ENCODE measurements at regions of chr7 and their contacts with region 1.

Region 1: GRCh38 chr7:50418086-50418515 is 32.0 kb downstream of the FIGNL1 start:
- DNase-seq: peak; percentile 55
- H3K4me3 ChIP-seq: no peak overlapping the region
- H3K27ac ChIP-seq: no peak overlapping the region
- H3K4me1 ChIP-seq: no peaks in the 10 kb centered on the region
- H3K27me3 ChIP-seq: peaks cover 7% of the 10 kb centered on the region
- CTCF ChIP-seq: peak; percentile 77

Region 2: DNA sequence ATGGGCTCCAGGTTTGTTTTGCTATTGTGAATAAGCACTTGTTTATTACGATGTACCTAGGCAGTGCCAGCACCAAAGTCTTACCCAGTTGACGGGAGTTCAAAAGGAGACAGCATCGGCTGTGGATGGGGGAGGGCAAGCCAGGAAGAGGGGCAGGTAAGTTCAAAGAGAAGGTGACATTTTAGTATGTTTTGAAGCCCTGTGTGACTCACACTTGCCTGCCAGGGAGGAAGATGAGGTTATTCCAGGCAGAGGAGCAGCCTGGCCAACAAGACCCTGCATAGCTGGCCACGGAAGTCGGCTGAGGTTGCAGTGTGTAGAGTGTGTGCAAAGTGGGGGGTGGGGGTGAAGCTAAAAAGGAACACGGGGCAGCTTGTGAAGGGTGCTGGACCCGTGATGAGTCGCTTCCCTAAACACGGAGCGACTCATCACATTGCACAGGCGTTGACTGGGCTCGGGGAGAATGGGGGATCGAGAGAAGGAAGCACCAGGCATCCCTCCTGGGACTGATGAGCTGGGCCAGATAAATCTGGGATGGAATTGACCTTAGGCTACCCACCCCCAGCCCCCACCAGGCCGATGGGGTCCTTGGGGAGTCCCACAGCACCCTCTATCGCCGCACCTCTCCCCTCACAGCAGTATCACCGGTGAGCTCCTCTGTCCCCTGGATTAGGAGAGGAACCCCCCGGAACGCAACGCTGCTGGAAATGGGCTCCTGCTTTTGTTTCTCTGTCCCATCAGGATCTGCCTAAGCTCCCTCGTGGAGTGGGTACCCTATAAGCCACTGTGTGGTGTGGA is 211.4 kb before region 1 on chr7:
- intact Hi-C with region 1: loop called (anchors 5 kb)
- DNase-seq: no peak
- H3K4me3 ChIP-seq: no peak overlapping the region
- H3K27ac ChIP-seq: no peak overlapping the region
- H3K4me1 ChIP-seq: peaks cover 2% of the 10 kb centered on the region
- H3K27me3 ChIP-seq: peaks cover 61% of the 10 kb centered on the region
- CTCF ChIP-seq: no peak

Region 3: DNA sequence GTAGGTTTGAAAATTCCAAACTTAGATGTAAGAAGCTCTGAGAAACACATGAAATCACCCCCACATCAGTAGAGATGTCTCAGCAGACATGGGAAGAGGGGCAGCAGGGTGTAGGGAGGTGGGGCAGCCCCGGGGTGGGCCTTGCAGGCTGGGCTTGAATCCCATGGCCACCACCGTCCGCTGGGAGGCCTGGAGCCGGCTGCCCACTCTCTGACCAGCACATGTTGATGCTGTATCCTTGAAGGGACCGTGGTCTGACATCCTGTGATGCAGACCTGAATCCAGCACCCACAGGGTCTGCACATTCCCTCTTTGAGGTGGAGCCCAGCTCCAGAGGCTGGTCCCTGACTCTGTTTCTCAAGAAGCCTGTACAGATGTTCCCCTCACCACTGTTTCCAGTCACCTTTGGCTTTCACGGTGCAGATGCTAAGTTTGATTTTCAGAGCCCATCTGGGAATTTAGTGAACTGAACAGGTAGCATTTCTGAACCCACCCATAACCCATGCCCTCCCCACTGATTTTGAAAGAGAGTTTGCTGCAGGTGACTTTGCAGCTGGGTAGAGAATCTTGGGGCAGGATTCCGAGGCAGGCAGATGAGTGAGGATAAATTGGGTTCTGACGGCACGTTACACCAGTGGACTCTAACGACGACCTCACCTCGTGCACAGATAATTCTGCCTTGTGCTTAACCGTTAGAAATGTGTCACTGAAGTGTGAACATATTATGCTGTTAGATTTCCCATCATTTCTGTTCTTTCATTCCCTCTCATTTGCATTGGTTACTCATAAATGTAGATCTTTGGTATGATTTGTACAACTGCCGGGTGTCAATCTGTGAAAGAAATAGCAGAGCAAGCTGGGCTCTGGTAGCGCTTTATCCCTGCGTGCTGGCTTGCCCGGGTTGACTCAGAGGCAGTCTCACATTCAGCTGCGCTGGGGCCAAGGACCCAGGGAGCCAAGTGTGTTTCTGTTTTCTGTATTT is 67.8 kb before region 1 on chr7:
- intact Hi-C with region 1: no loop called
- DNase-seq: no peak
- H3K4me3 ChIP-seq: no peak overlapping the region
- H3K27ac ChIP-seq: no peak overlapping the region
- H3K4me1 ChIP-seq: no peaks in the 10 kb centered on the region
- H3K27me3 ChIP-seq: peaks cover 94% of the 10 kb centered on the region
- CTCF ChIP-seq: no peak

Region 4: GRCh38 chr7:50379082-50379481 is 39.0 kb before region 1 on chr7:
- intact Hi-C with region 1: no loop called
- DNase-seq: no peak
- H3K4me3 ChIP-seq: no peak overlapping the region
- H3K27ac ChIP-seq: no peak overlapping the region
- H3K4me1 ChIP-seq: no peaks in the 10 kb centered on the region
- H3K27me3 ChIP-seq: peaks cover 41% of the 10 kb centered on the region
- CTCF ChIP-seq: no peak